Psoas muscle (tissue), 8 donors: ENCODE measurements at regions of chr4 and their contacts with region 1.

Region 1: DNA sequence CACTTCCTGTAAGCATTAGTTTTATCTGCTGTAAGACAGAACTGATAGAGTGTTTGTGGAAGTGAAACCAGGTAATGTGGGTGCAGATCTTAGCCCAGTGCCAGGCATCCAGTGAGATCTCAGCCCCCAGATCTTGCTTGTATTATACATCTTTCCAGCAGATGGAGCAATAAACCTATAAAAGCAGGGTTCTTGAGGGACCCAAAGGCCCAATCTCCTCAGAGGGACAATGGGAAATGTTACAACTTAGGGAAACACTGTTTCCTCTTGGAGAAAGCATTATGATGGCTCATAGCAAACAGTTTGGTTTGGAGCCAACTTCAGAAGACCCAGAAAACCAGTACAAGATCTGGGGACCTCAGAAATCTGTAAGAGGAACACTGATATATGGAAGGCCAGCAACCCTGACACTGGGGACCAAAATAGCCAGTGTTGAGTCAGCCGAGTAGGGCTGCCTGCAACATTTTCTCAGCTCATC is 206.3 kb downstream of the SLC7A11 start:
- DNase-seq: no peak
- ATAC-seq: peak; percentile 76 to 95 (median 90)
- H3K4me3 ChIP-seq: no peak overlapping the region
- H3K27ac ChIP-seq: no peak overlapping the region
- H3K4me1 ChIP-seq: no peaks in the 10 kb centered on the region
- H3K27me3 ChIP-seq: no peaks in the 10 kb centered on the region
- CTCF ChIP-seq: peak; percentile 55

Region 2: GRCh38 chr4:138090150-138090917 is 54.5 kb after region 1 on chr4:
- intact Hi-C with region 1: loop called (anchors 2 to 5 kb)
- DNase-seq: peak in 1 of 2 donors; percentile 15
- ATAC-seq: peak; percentile 70 to 85 (median 76)
- H3K4me3 ChIP-seq: peak overlapping the region; percentile 50
- H3K27ac ChIP-seq: no peak overlapping the region
- H3K4me1 ChIP-seq: peaks cover 14% of the 10 kb centered on the region
- H3K27me3 ChIP-seq: no peaks in the 10 kb centered on the region
- CTCF ChIP-seq: peak; percentile 79

Region 3: GRCh38 chr4:138182838-138183426 is 147.1 kb after region 1 on chr4:
- intact Hi-C with region 1: loop called (anchors 5 kb)
- DNase-seq: no peak
- ATAC-seq: peak; percentile 48 to 89 (median 74)
- H3K4me3 ChIP-seq: no peak overlapping the region
- H3K27ac ChIP-seq: no peak overlapping the region
- H3K4me1 ChIP-seq: peaks cover 19% of the 10 kb centered on the region
- H3K27me3 ChIP-seq: no peaks in the 10 kb centered on the region
- CTCF ChIP-seq: peak; percentile 76

Region 4: DNA sequence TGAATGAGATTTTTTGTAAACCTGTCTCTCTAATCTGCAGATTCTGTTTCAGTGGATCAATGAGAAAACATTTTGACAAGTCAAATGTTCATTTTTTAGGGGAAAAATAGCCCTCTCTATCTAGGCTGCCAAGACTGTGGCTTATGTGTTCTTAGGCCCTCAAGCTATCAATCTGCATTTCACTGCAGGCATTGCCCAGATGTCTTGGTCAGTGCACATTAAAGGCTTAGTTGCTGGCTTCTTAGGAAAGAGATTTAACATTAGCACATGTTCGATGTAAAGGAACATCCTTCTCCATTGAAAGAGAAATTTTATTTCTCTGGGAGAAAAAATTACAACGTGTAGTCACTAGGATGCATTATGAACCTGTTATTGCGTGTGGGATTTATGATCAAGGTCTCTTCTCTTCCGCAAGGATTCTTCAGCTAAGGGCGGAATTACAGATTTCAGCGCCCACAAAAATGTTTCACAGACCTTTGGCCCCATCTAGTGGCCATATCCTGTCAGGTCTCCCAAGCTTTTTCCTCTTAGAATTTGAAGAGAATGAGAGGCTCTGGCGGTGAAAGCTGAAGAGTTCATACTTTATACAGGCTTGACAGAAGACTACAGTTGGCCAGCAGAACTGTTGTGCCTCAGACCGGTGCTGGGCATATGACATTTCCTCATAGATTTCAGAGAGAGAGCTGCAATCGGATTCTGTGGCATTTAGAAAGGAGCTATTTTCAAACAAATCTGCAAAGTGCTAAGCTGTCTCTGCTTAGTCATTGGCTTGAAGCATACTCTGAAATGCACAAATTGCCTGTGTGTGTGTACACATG is 835.1 kb after region 1 on chr4:
- intact Hi-C with region 1: loop called in 1 of 2 experiments (anchors 5 kb)
- DNase-seq: peak in 1 of 2 donors; percentile 20
- ATAC-seq: peak; percentile 68 to 90 (median 76)
- H3K4me3 ChIP-seq: no peak overlapping the region
- H3K27ac ChIP-seq: no peak overlapping the region
- H3K4me1 ChIP-seq: no peaks in the 10 kb centered on the region
- H3K27me3 ChIP-seq: no peaks in the 10 kb centered on the region
- CTCF ChIP-seq: peak; percentile 87